ENCODE measurements at regions of chr3 and their contacts with region 1.

Region 1: DNA sequence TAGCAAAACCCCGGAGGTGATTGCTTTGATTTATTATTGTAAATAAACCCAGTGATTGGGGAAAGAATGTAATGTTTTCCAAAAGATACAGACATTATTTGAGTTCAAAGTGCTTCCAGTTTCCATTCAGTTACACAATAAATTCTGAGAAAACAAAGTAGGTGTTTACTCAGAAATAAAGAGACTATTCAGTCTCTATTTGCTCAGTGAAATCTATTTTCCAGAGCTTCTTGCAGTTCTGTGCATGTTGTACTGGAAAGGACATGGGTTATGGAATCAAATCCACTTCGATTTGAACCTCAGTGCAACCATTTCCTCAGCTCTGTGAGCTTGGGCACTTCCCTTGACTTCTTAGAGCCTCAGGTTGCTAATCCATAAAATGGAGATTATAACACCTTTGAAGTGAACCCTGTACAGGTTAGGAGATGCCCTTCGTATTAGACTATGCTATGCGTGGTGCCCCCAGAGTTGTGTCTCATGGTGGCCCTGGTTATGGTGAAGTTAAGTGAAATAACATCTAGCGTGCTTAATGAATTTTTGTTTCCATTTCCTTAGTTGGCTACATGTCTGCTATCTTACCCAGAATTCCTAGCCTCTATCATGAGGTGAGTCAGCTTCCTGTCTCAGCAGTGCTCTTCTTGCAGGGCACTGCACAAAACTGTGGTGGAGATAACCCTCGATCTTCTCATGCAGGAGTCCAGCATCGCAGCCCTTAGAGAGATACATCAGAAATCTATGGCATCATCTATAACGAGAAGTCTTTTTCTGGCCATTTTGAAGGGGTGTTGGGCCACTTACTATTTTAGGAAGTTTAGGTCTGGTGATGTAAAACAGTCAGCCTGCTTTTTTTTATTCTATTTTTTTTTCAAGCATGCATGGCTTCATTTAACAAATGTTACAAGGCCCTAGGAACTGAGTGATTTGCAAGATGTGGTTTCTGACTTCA is 97.7 kb downstream of the RPL39L start:
- DNase-seq: peak; percentile 57
- H3K4me3 Mint-ChIP-seq: peak overlapping the region; percentile 82
- H3K27ac Mint-ChIP-seq: peak overlapping the region; percentile 95
- H3K4me1 Mint-ChIP-seq: peaks cover 85% of the 10 kb centered on the region
- H3K27me3 Mint-ChIP-seq: no peaks in the 10 kb centered on the region

Region 2: DNA sequence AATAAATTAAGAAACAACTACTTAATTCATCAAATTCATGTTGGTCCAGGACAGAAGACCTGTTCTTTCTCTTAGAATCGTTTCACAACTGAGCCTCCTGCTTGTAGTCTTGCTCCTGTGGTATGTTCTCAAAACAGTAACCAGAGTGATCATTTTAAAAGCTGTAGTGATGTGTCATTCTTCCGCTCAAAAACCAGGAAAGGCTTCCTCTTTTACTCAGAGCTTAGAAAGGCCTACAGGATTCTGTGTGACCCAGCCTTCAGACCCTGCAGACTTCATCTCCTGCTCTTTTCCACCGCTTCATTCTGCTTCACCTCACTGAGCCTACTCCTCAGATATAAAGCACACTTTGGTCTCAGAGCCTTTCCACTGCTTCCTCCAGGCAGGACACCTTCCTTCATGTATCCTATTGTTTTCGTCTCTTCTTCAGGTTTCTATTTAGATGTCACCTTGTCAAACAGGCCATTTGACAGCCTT is 88.6 kb before region 1 on chr3:
- intact Hi-C with region 1: loop called (anchors 5 kb)
- DNase-seq: peak; percentile 16
- H3K4me3 Mint-ChIP-seq: peak overlapping the region; percentile 59
- H3K27ac Mint-ChIP-seq: peak overlapping the region; percentile 89
- H3K4me1 Mint-ChIP-seq: peaks cover 83% of the 10 kb centered on the region
- H3K27me3 Mint-ChIP-seq: no peaks in the 10 kb centered on the region

Region 3: GRCh38 chr3:187066228-187066995 is 24.8 kb after region 1 on chr3:
- intact Hi-C with region 1: loop called (anchors 2 kb)
- DNase-seq: peak; percentile 29
- H3K4me3 Mint-ChIP-seq: no peak overlapping the region
- H3K27ac Mint-ChIP-seq: peak overlapping the region; percentile 67
- H3K4me1 Mint-ChIP-seq: peaks cover 55% of the 10 kb centered on the region
- H3K27me3 Mint-ChIP-seq: no peaks in the 10 kb centered on the region

Region 4: GRCh38 chr3:187130346-187131066 is 88.9 kb after region 1 on chr3:
- intact Hi-C with region 1: loop called (anchors 2 kb)
- DNase-seq: peak; percentile 47
- H3K4me3 Mint-ChIP-seq: peak overlapping the region; percentile 51
- H3K27ac Mint-ChIP-seq: peak overlapping the region; percentile 91
- H3K4me1 Mint-ChIP-seq: peaks cover 58% of the 10 kb centered on the region
- H3K27me3 Mint-ChIP-seq: no peaks in the 10 kb centered on the region